GM12878 (cell line): ENCODE measurements at regions of chr4 and their contacts with region 1.

Region 1: DNA sequence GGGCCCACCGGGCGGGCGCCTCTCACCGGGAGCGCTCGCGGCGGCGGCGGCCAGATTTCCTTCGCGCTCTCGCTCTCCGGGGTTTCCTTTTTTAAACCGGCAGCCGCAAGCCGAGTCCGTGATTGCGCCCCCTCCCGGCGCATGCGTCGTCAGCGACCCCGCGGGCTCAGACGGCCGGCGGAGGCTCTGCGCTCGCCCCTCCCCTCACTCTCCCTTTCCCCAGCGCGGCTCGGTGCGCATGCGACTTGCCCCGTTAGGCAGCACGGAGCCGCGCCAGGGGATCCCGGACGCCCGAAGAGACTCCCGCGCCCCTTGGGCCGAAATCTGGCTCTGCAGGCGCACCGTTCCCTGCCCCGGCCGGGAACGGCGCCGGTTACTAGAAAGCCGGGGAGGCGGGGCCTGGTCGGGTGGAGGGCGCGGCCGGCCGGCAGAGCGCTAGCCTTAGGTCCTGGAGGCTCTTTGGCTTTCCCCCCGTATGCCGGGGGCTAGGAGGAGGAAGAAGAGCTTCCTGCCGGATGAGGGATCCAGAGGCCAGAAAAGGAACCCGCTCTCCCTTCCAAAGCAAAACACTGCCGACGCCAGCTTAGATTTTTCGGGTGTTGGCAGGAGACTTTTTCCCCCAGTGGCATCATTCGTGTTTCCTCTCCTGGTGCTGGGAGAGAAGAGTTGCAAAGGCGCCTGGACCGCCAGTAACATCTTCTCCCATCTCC is at the start of gene CLOCK:
- DNase-seq: no peak
- ATAC-seq: peak; percentile 84
- H3K4me3 ChIP-seq: peak within 1 kb of the TSS; percentile 80
- H3K27ac ChIP-seq: peak within 1 kb of the TSS; percentile 88
- H3K4me1 ChIP-seq: no peaks in the 10 kb centered on the region
- H3K27me3 ChIP-seq: no peaks in the 10 kb centered on the region
- CTCF ChIP-seq: peak; percentile 32 to 52 (median 33); a peak in 5 of 6 replicates
- EP300 ChIP-seq: no peak
- POLR2A ChIP-seq: peak; percentile 74
- RAD21 ChIP-seq: no peak
- polyA plus RNA-seq, gene CLOCK: 2.8 to 3.5 TPM

Region 2: DNA sequence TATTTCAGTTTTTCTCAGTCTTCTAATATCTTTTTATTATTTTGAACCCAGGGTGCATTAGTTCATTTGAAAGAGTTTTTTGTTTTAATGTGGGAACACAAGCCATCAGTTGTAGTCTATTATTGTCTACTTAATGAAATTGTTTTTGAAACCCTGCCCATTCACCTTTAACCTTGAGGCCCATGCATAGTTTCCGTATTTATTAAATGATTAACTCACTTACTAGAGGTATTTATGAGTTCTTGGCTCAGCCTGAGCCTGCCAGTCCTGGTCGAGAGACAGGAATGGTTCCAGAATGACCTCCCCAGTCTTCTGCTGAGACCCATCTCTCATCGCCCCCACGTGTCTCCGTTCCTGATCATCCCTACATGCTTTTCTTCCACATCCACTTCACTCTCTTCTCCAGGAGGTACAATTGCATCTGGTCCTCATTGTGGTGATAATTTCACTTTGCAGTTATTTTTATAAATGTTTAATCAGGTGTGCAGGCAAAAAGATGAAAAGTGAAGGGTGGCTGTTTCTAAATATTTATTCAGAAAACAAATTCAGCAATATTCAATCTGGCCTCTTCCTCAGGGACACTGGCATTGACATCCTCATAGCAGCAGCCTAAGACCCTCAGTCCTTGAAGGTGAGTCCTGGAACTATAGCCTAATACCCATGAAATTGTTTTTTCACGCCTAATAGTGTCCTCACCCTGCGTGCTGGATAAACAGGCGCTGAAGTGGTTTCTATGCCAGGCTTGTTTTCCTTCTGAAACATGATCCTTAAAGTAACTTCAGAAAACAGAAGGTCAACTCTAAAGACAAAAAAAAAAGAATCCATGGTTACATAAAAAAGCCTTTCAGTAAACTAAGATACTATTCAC is 534.3 kb before region 1 on chr4:
- CTCF ChIA-PET with region 1: no interaction called
- POLR2A ChIA-PET with region 1: no interaction called
- RAD21 ChIA-PET with region 1: no interaction called
- SMC1A ChIA-PET with region 1: no interaction called
- in situ Hi-C with region 1: no loop called
- intact Hi-C with region 1: no loop called
- DNase-seq: no peak
- ATAC-seq: no peak
- H3K4me3 ChIP-seq: no peak overlapping the region
- H3K27ac ChIP-seq: no peak overlapping the region
- H3K4me1 ChIP-seq: no peaks in the 10 kb centered on the region; the same call in 1 of the 2 replicates
- H3K27me3 ChIP-seq: no peaks in the 10 kb centered on the region
- CTCF ChIP-seq: no peak
- EP300 ChIP-seq: no peak
- POLR2A ChIP-seq: no peak
- RAD21 ChIP-seq: no peak

Region 3: GRCh38 chr4:55395529-55396307 is 151.2 kb before region 1 on chr4 and contains the start of gene TMEM165:
- CTCF ChIA-PET with region 1: interaction called, 3 read pairs
- POLR2A ChIA-PET with region 1: interaction called, 5 read pairs
- RAD21 ChIA-PET with region 1: interaction called, 4 read pairs
- SMC1A ChIA-PET with region 1: interaction called, 5 read pairs
- in situ Hi-C with region 1: loop called (anchors 5 kb)
- intact Hi-C with region 1: loop called (anchors 2 kb)
- DNase-seq: peak; percentile 41
- ATAC-seq: peak; percentile 94
- H3K4me3 ChIP-seq: peak within 1 kb of the TSS; percentile 88
- H3K27ac ChIP-seq: peak within 1 kb of the TSS; percentile 91
- H3K4me1 ChIP-seq: peaks cover 3% of the 10 kb centered on the region; the same call in 1 of the 2 replicates
- H3K27me3 ChIP-seq: no peaks in the 10 kb centered on the region
- CTCF ChIP-seq: no peak
- EP300 ChIP-seq: no peak
- POLR2A ChIP-seq: peak; percentile 99
- RAD21 ChIP-seq: no peak
- polyA plus RNA-seq, gene TMEM165: 18.3 to 32.5 TPM

Region 4: GRCh38 chr4:55444827-55445226 is 102.1 kb before region 1 on chr4:
- CTCF ChIA-PET with region 1: interaction called, 8 read pairs
- POLR2A ChIA-PET with region 1: no interaction called
- RAD21 ChIA-PET with region 1: no interaction called
- SMC1A ChIA-PET with region 1: interaction called, 3 read pairs
- in situ Hi-C with region 1: no loop called
- intact Hi-C with region 1: loop called (anchors 5 kb)
- DNase-seq: no peak
- ATAC-seq: no peak
- H3K4me3 ChIP-seq: no peak overlapping the region
- H3K27ac ChIP-seq: no peak overlapping the region
- H3K4me1 ChIP-seq: peaks cover 3% of the 10 kb centered on the region; the same call in 1 of the 2 replicates
- H3K27me3 ChIP-seq: no peaks in the 10 kb centered on the region
- CTCF ChIP-seq: peak; percentile 12 to 39 (median 14); a peak in 4 of 6 replicates
- EP300 ChIP-seq: no peak
- POLR2A ChIP-seq: no peak
- RAD21 ChIP-seq: peak; percentile 47

Region 5: DNA sequence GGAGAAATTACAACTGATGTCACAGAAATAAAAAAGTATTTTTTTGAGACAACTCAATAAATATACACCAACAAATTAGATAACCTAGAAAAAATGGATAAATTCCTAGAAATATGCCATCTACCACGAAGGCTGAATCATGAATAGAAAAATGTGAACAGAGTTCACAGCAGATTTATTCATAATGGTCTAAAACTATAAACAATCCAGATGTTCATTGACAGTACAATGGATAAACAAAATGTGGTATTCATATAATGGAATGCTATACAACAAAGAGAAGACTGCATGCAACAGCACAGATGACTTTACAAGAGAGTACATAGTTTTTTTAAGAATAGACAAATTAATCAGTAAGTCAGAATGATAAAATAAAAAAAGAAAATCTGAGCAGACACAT is 55.4 kb before region 1 on chr4:
- CTCF ChIA-PET with region 1: no interaction called
- POLR2A ChIA-PET with region 1: no interaction called
- RAD21 ChIA-PET with region 1: no interaction called
- SMC1A ChIA-PET with region 1: no interaction called
- in situ Hi-C with region 1: no loop called
- intact Hi-C with region 1: no loop called
- DNase-seq: no peak
- ATAC-seq: no peak
- H3K4me3 ChIP-seq: no peak overlapping the region
- H3K27ac ChIP-seq: no peak overlapping the region
- H3K4me1 ChIP-seq: no peaks in the 10 kb centered on the region
- H3K27me3 ChIP-seq: no peaks in the 10 kb centered on the region
- CTCF ChIP-seq: no peak
- EP300 ChIP-seq: no peak
- POLR2A ChIP-seq: no peak
- RAD21 ChIP-seq: no peak

Region 6: GRCh38 chr4:55866973-55867574 is 320.2 kb after region 1 on chr4:
- CTCF ChIA-PET with region 1: interaction called, 4 read pairs
- POLR2A ChIA-PET with region 1: no interaction called
- RAD21 ChIA-PET with region 1: interaction called, 3 read pairs
- SMC1A ChIA-PET with region 1: interaction called, 3 read pairs
- in situ Hi-C with region 1: no loop called
- intact Hi-C with region 1: loop called (anchors 1 kb)
- DNase-seq: peak; percentile 38
- ATAC-seq: peak; percentile 98
- H3K4me3 ChIP-seq: no peak overlapping the region
- H3K27ac ChIP-seq: peak overlapping the region; percentile 31; the same call in 1 of the 2 replicates
- H3K4me1 ChIP-seq: peaks cover 7% of the 10 kb centered on the region; the same call in 1 of the 2 replicates
- H3K27me3 ChIP-seq: no peaks in the 10 kb centered on the region
- CTCF ChIP-seq: peak; percentile 70 to 77 (median 77); a peak in 5 of 6 replicates
- EP300 ChIP-seq: no peak
- POLR2A ChIP-seq: no peak
- RAD21 ChIP-seq: peak; percentile 80

Region 7: GRCh38 chr4:56055027-56055977 is 508.4 kb after region 1 on chr4:
- CTCF ChIA-PET with region 1: no interaction called
- POLR2A ChIA-PET with region 1: no interaction called
- RAD21 ChIA-PET with region 1: no interaction called
- SMC1A ChIA-PET with region 1: no interaction called
- in situ Hi-C with region 1: no loop called
- intact Hi-C with region 1: no loop called
- DNase-seq: no peak
- ATAC-seq: no peak
- H3K4me3 ChIP-seq: no peak overlapping the region
- H3K27ac ChIP-seq: no peak overlapping the region
- H3K4me1 ChIP-seq: no peaks in the 10 kb centered on the region
- H3K27me3 ChIP-seq: peaks cover 0 to 2% of the 10 kb centered on the region in 2 experiments; a peak in 1 of 4 replicates
- CTCF ChIP-seq: no peak
- EP300 ChIP-seq: no peak
- POLR2A ChIP-seq: no peak
- RAD21 ChIP-seq: no peak